ENCODE measurements at regions of chr1 and their contacts with region 1.

Region 1: DNA sequence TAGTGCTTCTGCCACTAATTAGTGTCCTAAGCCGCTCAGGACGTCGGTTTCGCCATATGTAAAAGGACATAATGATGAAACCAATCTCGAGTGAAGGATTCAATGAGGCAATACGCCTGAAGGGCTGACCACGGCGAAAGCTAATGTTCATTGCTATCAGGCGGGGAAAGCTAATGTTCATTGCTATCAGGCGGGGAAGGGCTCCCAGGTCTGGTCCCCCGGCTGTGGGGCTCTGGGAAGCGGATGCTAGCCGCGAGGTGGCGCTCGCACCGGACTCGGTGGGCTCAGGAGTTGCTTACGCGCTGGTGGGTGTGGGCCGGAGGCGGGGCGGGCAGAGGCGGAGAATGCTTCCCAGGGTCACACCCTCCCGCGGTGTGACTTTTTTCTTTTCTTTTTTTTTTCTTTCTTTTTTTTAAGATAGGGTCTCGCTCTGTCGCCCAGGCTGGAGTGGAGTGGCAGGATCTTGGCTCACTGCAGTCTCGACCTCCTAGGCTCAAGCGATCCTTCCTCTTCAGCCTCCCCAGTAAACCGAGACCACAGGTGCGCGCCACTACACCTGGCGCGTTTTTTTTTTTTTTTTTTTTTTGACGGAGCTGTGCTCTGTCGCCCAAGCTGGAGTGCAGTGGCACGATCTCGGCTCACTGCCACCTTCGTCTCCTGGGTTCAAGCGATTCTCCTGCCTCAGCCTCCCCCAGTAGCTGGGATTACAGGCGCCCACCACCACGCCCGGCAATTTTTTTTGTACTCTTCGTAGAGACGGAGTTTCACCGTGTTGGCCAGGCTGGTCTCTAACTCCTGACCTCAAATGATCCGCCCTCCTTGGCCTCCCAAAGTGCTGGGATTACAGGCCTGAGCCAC is 1.1 kb upstream of the PEAR1 start:
- DNase-seq: peak; percentile 91 to 96 (median 92)
- ATAC-seq: peak; percentile 94
- H3K4me3 ChIP-seq: no peak overlapping the region
- H3K27ac ChIP-seq: no peak overlapping the region; the same call in 2 of the 3 replicates
- H3K4me1 ChIP-seq: peaks cover 30 to 48% of the 10 kb centered on the region in 2 experiments
- H3K27me3 ChIP-seq: no peaks in the 10 kb centered on the region
- CTCF ChIP-seq: peak; percentile 91 to 94 (median 93)
- EP300 ChIP-seq: no peak
- POLR2A ChIP-seq: no peak
- RAD21 ChIP-seq: peak; percentile 87 to 93

Region 2: DNA sequence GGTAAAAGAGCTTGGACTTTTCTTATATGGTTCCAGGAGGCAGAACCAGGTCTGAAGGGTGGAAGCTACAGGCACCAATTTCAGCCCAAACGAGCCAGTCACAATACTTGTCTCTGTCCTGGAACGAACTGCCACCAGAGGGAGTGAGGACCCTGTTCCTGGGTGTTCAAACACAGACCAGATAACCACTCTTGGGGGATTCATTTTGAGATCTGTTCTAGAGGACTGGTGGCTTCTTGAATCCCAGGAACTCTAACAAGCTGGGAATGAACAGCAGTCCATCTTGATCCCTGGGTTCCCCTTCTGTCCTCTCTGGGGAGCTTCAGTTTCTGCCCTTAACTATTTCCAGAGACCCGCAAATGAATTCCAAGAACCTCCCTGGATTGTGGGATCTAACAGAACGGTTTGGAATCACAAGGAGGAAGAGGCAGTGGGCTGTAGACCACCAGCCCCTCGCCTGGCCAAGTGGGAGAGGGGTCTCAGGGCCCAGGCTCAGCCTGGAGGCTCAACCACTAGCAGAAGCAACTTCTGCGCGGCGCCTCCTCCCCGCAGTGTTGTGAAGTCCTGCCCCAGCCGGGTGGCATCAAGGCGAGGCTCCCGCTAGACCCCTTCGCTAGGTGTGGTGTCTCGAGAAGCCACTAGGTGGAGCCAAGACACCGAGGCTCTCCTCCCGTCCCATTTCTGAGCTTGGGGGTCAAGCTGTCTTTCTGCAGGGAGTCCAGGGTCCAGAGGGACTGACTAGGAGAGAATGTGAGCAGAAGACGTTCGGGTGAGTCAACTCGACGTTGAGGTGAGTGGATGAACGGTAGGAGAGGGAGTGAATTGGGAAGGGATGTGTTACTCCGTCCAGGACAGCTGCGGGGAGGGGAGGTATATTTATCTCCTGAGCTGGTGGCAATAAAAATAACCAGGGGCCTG is 203.1 kb before region 1 on chr1:
- CTCF ChIA-PET with region 1: interaction called, 7 read pairs
- POLR2A ChIA-PET with region 1: interaction called, 3 read pairs
- in situ Hi-C with region 1: no loop called
- intact Hi-C with region 1: loop called (anchors 1 kb)
- DNase-seq: peak; percentile 87 to 90 (median 88)
- ATAC-seq: peak; percentile 81
- H3K4me3 ChIP-seq: peak overlapping the region; percentile 32
- H3K27ac ChIP-seq: peak overlapping the region; percentile 21; the same call in 2 of the 3 replicates
- H3K4me1 ChIP-seq: peaks cover 45 to 54% of the 10 kb centered on the region in 2 experiments
- H3K27me3 ChIP-seq: 0 out of 5 replicates have a peak, but pooled peaks cover 0 to 2% of the 10 kb centered on the region in 2 experiments
- CTCF ChIP-seq: peak; percentile 92 to 97 (median 97)
- EP300 ChIP-seq: 0 out of 2 replicates have a peak, but pooled peaks have one; percentile 12
- POLR2A ChIP-seq: no peak
- RAD21 ChIP-seq: peak; percentile 94 to 98

Region 3: GRCh38 chr1:156838981-156839410 is 53.4 kb before region 1 on chr1:
- CTCF ChIA-PET with region 1: interaction called, 24 read pairs
- POLR2A ChIA-PET with region 1: no interaction called
- in situ Hi-C with region 1: no loop called
- intact Hi-C with region 1: loop called (anchors 1 kb)
- DNase-seq: peak; percentile 61 to 77 (median 75)
- ATAC-seq: peak; percentile 87
- H3K4me3 ChIP-seq: no peak overlapping the region
- H3K27ac ChIP-seq: no peak overlapping the region
- H3K4me1 ChIP-seq: peaks cover 6 to 8% of the 10 kb centered on the region in 2 experiments; a peak in 4 of 5 replicates
- H3K27me3 ChIP-seq: peaks cover 5 to 7% of the 10 kb centered on the region in 2 experiments; a peak in 4 of 5 replicates
- CTCF ChIP-seq: peak; percentile 90 to 95 (median 94)
- EP300 ChIP-seq: no peak
- POLR2A ChIP-seq: no peak
- RAD21 ChIP-seq: peak; percentile 88 to 94

Region 4: GRCh38 chr1:156920233-156921052 is 28.0 kb after region 1 on chr1 and contains the start of gene LRRC71:
- CTCF ChIA-PET with region 1: interaction called, 19 read pairs
- POLR2A ChIA-PET with region 1: interaction called, 4 read pairs
- in situ Hi-C with region 1: loop called (anchors 5 kb)
- intact Hi-C with region 1: loop called (anchors 1 kb)
- DNase-seq: peak; percentile 94 to 96 (median 95)
- ATAC-seq: peak; percentile 97
- H3K4me3 ChIP-seq: peak within 1 kb of the TSS; percentile 15; the same call in 1 of the 2 replicates
- H3K27ac ChIP-seq: no peak within 1 kb of the TSS
- H3K4me1 ChIP-seq: peaks cover 17 to 34% of the 10 kb centered on the region in 2 experiments
- H3K27me3 ChIP-seq: peaks cover 8 to 17% of the 10 kb centered on the region in 2 experiments; a peak in 3 of 5 replicates
- CTCF ChIP-seq: peak; percentile 97 to 98 (median 97)
- EP300 ChIP-seq: no peak
- POLR2A ChIP-seq: no peak
- RAD21 ChIP-seq: peak; percentile 99
- polyA plus RNA-seq, gene LRRC71: 0.23 to 0.38 TPM

Region 5: DNA sequence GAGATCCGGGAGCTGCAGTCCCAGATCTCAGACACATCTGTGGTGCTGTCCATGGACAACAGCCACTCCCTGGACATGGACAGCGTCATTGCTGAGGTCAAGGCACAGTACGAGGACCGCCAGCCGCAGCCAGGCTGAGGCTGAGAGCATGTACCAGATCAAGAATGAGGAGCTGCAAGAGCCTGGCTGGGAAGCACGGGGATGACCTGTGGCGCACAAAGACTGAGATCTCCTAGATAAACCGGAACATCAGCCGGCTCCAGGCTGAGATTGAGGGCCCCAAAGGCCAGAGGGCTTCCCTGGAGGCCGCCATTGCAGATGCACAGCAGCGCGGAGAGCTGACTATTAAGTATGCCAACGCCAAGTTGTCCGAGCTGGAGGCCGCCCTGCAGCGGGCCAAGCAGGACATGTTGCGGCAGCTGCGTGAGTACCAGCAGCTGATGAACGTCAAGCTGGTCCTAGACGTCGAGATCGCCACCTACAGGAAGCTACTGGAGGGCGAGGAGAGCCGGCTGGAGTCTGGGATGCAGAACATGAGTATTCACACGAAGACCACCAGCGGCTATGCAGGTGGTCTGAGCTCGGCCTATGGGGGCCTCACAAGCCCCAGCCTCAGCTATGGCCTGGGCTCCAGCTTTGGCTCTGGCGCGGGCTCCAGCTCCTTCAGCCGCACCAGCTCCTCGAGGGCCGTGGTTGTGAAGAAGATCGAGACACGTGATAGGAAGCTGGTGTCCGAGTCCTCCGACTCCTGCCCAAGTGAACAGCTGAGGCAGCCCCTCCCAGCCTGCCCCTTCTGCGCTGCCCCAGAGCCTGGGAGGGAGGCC is 181.7 kb after region 1 on chr1:
- CTCF ChIA-PET with region 1: interaction called, 3 read pairs
- POLR2A ChIA-PET with region 1: no interaction called
- in situ Hi-C with region 1: no loop called
- intact Hi-C with region 1: loop called (anchors 1 kb)
- DNase-seq: peak in 2 of 4 experiments; percentile 55 to 83
- ATAC-seq: peak; percentile 80
- H3K4me3 ChIP-seq: no peak overlapping the region
- H3K27ac ChIP-seq: no peak overlapping the region
- H3K4me1 ChIP-seq: peaks cover 0 to 13% of the 10 kb centered on the region in 2 experiments; a peak in 3 of 5 replicates
- H3K27me3 ChIP-seq: peaks cover 0 to 15% of the 10 kb centered on the region in 2 experiments; a peak in 4 of 5 replicates
- CTCF ChIP-seq: peak; percentile 70 to 76 (median 71)
- EP300 ChIP-seq: no peak
- POLR2A ChIP-seq: no peak
- RAD21 ChIP-seq: peak; percentile 55 to 78

Region 6: GRCh38 chr1:157147906-157148717 is 255.7 kb after region 1 on chr1:
- CTCF ChIA-PET with region 1: no interaction called
- POLR2A ChIA-PET with region 1: no interaction called
- in situ Hi-C with region 1: no loop called
- intact Hi-C with region 1: no loop called
- DNase-seq: peak in 1 of 4 experiments; percentile 24
- ATAC-seq: peak; percentile 43
- H3K4me3 ChIP-seq: no peak overlapping the region
- H3K27ac ChIP-seq: peak overlapping the region; percentile 23; the same call in 2 of the 3 replicates
- H3K4me1 ChIP-seq: peaks cover 7 to 45% of the 10 kb centered on the region in 2 experiments; a peak in 4 of 5 replicates
- H3K27me3 ChIP-seq: no peaks in the 10 kb centered on the region
- CTCF ChIP-seq: no peak
- EP300 ChIP-seq: no peak
- POLR2A ChIP-seq: no peak
- RAD21 ChIP-seq: no peak